Naive thymus-derived CD8-positive, alpha-beta T cell (primary cell): ENCODE measurements at regions of chr21 and their contacts with region 1.

Region 1: GRCh38 chr21:41425954-41426675 is at the start of gene MX1:
- DNase-seq: peak; percentile 74 to 92 (median 85)
- ATAC-seq: peak; percentile 97 to 98
- H3K4me3 Mint-ChIP-seq: peak within 1 kb of the TSS; percentile 93 to 98 (median 96)
- H3K27ac Mint-ChIP-seq: peak within 1 kb of the TSS; percentile 91 to 99 (median 96)
- H3K4me1 Mint-ChIP-seq: peaks cover 14 to 86% (median 40%) of the 10 kb centered on the region in 4 donors
- H3K27me3 Mint-ChIP-seq: no peaks in the 10 kb centered on the region
- polyA plus RNA-seq, gene MX1: 36.8 to 64.7 (median 44.8) TPM

Region 2: DNA sequence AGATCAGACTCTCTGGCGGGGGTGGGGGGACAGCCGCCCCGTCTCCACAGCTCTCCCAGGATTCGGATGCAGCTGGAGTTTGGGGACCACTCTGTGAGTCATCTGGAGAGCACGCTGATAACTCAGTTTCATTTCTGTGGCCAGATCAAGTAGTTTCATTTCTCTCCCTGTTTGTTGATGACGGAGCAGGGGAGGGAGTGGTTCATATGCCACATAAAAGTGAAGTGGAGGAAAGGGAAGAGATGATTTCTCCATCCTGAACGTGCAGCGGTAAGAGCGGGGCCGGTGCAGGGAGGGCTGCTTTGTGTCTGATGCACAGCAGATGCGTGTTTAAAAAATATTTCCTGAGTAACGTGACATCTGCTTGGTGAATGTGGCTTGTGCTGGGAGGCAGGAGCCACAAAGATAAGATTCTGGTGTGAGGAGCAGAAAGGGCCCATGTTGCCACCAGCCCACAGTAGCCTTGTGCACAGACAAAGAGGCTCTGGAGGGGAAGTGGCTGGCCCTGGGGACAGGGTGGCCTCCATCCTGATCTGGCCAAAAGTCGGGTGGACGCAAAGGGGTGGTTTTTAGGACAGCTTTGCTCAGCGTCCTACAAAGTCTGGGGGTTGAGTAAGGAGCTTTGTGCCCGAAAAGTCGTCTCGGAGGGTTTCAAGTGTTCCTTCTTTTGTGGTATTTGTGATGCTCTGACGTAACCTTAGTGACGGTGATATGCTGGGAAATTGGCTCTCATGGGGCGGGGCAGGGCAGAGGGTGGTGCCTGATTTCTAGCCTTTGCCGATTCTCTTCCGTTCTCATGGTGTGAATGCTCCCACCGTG is 64.1 kb before region 1 on chr21 and contains the start of gene MX2:
- POLR2A ChIA-PET with region 1: interaction called, 61 read pairs
- DNase-seq: peak; percentile 64 to 95 (median 90)
- ATAC-seq: peak; percentile 75 to 79
- H3K4me3 Mint-ChIP-seq: peak within 1 kb of the TSS; percentile 86 to 99 (median 93)
- H3K27ac Mint-ChIP-seq: peak within 1 kb of the TSS; percentile 98 to 100 (median 100)
- H3K4me1 Mint-ChIP-seq: peaks cover 18 to 63% (median 60%) of the 10 kb centered on the region in 4 donors
- H3K27me3 Mint-ChIP-seq: peaks cover 0 to 4% (median 0%) of the 10 kb centered on the region in 5 donors
- polyA plus RNA-seq, gene MX2: 27.8 to 49.6 (median 42.4) TPM

Region 3: GRCh38 chr21:41369105-41369919 is 56.8 kb before region 1 on chr21:
- POLR2A ChIA-PET with region 1: interaction called, 61 read pairs
- DNase-seq: peak in 9 of 10 donors; percentile 24 to 71 (median 46)
- ATAC-seq: peak; percentile 78 to 83
- H3K4me3 Mint-ChIP-seq: peak overlapping the region; percentile 79 to 94 (median 90)
- H3K27ac Mint-ChIP-seq: peak overlapping the region; percentile 81 to 99 (median 96)
- H3K4me1 Mint-ChIP-seq: peaks cover 31 to 92% (median 82%) of the 10 kb centered on the region in 4 donors
- H3K27me3 Mint-ChIP-seq: no peaks in the 10 kb centered on the region

Region 4: GRCh38 chr21:41583274-41583790 is 157.2 kb after region 1 on chr21:
- POLR2A ChIA-PET with region 1: no interaction called
- DNase-seq: no peak
- ATAC-seq: no peak
- H3K4me3 Mint-ChIP-seq: no peak overlapping the region
- H3K27ac Mint-ChIP-seq: no peak overlapping the region
- H3K4me1 Mint-ChIP-seq: no peaks in the 10 kb centered on the region
- H3K27me3 Mint-ChIP-seq: peaks cover 3 to 13% (median 11%) of the 10 kb centered on the region in 5 donors